ENCODE measurements at regions of chr10 and their contacts with region 1.

Region 1: GRCh38 chr10:33258967-33259366 is 75.5 kb downstream of the NRP1 start:
- DNase-seq: peak; percentile 98
- ATAC-seq: peak; percentile 52
- H3K4me3 ChIP-seq: no peak overlapping the region
- H3K27ac ChIP-seq: peak overlapping the region; percentile 65
- H3K4me1 ChIP-seq: peaks cover 86% of the 10 kb centered on the region
- H3K27me3 ChIP-seq: no peaks in the 10 kb centered on the region
- CTCF ChIP-seq: no peak

Region 2: DNA sequence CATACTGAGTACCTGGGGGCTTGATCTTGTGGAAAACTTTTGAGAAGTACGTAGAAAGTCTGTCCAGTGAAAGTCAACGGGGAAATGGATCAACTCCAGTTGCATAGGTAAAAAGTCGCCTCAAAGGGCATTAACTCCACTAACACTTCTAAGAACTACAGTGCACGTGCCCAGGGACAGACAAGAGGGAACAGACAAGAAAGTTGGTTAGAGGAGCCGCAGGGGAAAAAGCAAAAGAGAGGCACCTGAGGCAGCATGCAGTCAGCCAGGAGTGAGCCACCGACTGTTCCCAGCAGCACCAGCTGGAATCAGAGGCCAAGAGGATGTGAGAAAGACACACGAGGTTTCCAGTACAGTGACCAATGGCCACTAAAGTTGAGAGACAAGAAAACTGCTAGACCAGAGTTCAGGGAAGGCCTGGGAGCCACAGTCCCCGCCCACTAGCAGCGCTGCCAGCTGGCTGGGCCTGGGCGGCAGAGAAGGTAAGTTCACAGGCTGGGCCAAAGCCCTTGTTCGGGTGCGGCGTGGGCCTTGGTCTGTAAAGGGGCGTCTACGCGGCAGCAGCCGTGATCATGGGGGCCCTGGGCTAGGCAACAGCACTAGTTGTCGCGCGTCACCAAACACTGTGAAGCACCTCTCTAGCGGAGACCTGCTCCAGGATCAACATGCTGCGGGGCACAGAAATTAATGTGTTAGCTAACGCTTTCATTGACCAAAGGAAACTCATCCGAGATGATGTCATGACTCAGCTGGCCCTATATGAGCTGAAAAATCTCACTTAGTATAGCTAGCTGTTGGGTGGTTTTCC is 314.9 kb before region 1 on chr10:
- CTCF ChIA-PET with region 1: no interaction called
- POLR2A ChIA-PET with region 1: no interaction called
- intact Hi-C with region 1: no loop called
- DNase-seq: no peak
- ATAC-seq: no peak
- H3K4me3 ChIP-seq: no peak overlapping the region
- H3K27ac ChIP-seq: no peak overlapping the region
- H3K4me1 ChIP-seq: peaks cover 69% of the 10 kb centered on the region
- H3K27me3 ChIP-seq: no peaks in the 10 kb centered on the region
- CTCF ChIP-seq: no peak

Region 3: DNA sequence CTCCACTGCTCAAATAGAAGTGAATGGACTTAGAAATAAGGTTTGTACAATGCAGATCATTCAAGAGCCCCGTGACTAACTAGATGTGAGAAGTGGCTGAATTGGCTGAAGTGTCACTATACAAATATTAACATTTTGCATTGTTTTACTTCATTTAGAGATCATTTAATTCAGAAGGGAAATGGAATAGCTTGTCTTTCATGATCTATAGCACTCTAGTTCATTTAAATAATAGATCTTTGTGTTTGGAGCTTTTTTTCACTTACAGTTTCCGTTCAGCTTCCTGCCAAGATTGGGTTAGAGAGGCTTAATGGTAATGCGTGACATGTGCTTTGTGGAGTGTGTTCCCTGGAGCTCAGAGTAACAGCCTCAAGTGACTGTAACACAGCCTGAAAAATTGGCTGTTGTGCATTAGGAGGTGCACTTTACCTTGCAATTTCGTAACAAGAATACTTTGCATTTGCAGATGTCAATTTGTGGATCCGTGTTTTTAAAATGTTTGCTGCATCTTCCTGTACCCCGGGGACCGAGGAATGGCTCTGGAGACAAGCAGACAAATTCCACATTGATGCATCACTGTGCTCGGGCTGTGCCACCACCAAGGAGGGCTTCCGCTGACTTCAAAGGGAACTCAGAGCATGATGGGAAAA is 94.8 kb before region 1 on chr10:
- CTCF ChIA-PET with region 1: no interaction called
- POLR2A ChIA-PET with region 1: interaction called, 5 read pairs
- intact Hi-C with region 1: loop called (anchors 1 kb)
- DNase-seq: peak; percentile 94
- ATAC-seq: peak; percentile 88
- H3K4me3 ChIP-seq: peak overlapping the region; percentile 0; the same call in 1 of the 2 replicates
- H3K27ac ChIP-seq: peak overlapping the region; percentile 44
- H3K4me1 ChIP-seq: peaks cover 19% of the 10 kb centered on the region
- H3K27me3 ChIP-seq: no peaks in the 10 kb centered on the region
- CTCF ChIP-seq: no peak

Region 4: DNA sequence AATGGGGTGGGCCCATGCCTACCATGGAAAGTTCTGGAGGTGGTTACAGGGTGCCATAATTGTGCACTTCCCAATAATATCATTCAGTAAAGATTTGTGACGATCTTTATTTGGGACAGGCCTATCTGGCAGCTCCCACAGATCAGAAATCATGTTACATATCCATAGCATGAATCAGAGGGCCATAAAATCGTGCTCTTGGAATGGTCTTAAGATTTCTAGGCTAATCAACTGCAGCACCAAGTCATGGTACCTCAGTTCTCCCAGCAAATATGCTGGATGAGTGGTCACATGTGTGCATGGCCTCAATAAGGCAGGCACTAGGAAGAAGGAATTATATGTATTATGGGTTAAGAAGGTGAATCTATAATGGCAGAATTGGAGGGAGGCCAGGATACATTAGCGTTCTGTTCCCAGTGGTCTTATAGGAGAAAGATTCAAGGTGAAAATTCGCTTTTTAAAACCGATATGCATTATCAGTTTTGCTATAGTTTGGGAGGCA is 59.2 kb before region 1 on chr10:
- CTCF ChIA-PET with region 1: interaction called, 3 read pairs
- POLR2A ChIA-PET with region 1: interaction called, 3 read pairs
- intact Hi-C with region 1: loop called (anchors 1 kb)
- DNase-seq: peak; percentile 98
- ATAC-seq: peak; percentile 57
- H3K4me3 ChIP-seq: no peak overlapping the region
- H3K27ac ChIP-seq: peak overlapping the region; percentile 26
- H3K4me1 ChIP-seq: peaks cover 57% of the 10 kb centered on the region
- H3K27me3 ChIP-seq: no peaks in the 10 kb centered on the region
- CTCF ChIP-seq: no peak

Region 5: GRCh38 chr10:33216661-33217427 is 42.1 kb before region 1 on chr10:
- CTCF ChIA-PET with region 1: interaction called, 5 read pairs
- POLR2A ChIA-PET with region 1: no interaction called
- intact Hi-C with region 1: loop called (anchors 1 kb)
- DNase-seq: peak; percentile 100
- ATAC-seq: peak; percentile 91
- H3K4me3 ChIP-seq: peak overlapping the region; percentile 6; the same call in 1 of the 2 replicates
- H3K27ac ChIP-seq: peak overlapping the region; percentile 65
- H3K4me1 ChIP-seq: peaks cover 46% of the 10 kb centered on the region
- H3K27me3 ChIP-seq: no peaks in the 10 kb centered on the region
- CTCF ChIP-seq: no peak